Endothelial cell of umbilical vein (primary cell): ENCODE measurements at regions of chr7 and their contacts with region 1.

Region 1: GRCh38 chr7:142478479-142479072 is 220.7 kb upstream of the PRSS58 start:
- DNase-seq: peak; percentile 56
- H3K4me3 ChIP-seq: no peak overlapping the region
- H3K27ac ChIP-seq: no peak overlapping the region
- H3K4me1 ChIP-seq: peaks cover 4% of the 10 kb centered on the region
- H3K27me3 ChIP-seq: peaks cover 2 to 10% of the 10 kb centered on the region in 2 experiments
- CTCF ChIP-seq: peak; percentile 61 to 81
- POLR2A ChIP-seq: no peak

Region 2: DNA sequence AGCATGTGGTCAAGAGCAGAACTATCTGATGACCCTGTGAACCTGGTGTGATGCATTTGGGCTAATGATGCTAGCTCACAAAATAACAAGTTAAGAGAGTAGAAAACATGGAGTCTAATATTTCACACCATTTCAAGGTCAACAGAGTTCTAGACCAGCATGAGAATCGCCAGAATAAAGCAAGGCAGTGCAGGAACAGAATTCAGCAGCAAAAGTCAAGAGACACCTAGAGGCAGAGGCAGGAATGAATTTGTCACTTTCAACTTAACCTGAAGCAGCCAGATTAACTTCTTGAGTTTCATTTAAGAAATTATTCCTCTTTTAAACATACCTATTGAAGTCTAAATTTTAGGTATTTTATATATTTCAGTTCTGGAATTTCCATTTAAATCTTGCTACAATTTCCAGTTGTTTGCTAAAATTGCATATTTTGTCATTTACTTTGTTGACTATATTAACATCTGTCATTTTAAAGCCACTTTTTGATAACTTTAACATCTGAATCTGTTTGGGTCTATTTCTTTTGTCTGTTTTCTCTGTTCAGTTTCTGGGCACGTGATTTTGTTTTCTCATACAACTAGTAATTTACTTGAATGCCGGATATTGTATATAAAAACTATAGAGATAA is 176.5 kb before region 1 on chr7:
- CTCF ChIA-PET with region 1: no interaction called
- POLR2A ChIA-PET with region 1: no interaction called
- dilution Hi-C with region 1: no loop called
- intact Hi-C with region 1: no loop called
- DNase-seq: no peak
- H3K4me3 ChIP-seq: no peak overlapping the region
- H3K27ac ChIP-seq: no peak overlapping the region
- H3K4me1 ChIP-seq: no peaks in the 10 kb centered on the region
- H3K27me3 ChIP-seq: no peaks in the 10 kb centered on the region
- CTCF ChIP-seq: peak in 1 of 2 donors; percentile 32
- POLR2A ChIP-seq: no peak

Region 3: GRCh38 chr7:142385491-142386340 is 92.9 kb before region 1 on chr7:
- CTCF ChIA-PET with region 1: interaction called, 9 read pairs
- POLR2A ChIA-PET with region 1: no interaction called
- dilution Hi-C with region 1: no loop called
- intact Hi-C with region 1: loop called (anchors 2 kb)
- DNase-seq: peak; percentile 58
- H3K4me3 ChIP-seq: no peak overlapping the region
- H3K27ac ChIP-seq: no peak overlapping the region
- H3K4me1 ChIP-seq: no peaks in the 10 kb centered on the region
- H3K27me3 ChIP-seq: no peaks in the 10 kb centered on the region
- CTCF ChIP-seq: peak; percentile 73 to 90
- POLR2A ChIP-seq: no peak

Region 4: GRCh38 chr7:142438235-142438922 is 40.2 kb before region 1 on chr7:
- CTCF ChIA-PET with region 1: interaction called, 33 read pairs
- POLR2A ChIA-PET with region 1: no interaction called
- dilution Hi-C with region 1: no loop called
- intact Hi-C with region 1: loop called (anchors 1 kb)
- DNase-seq: peak; percentile 38
- H3K4me3 ChIP-seq: no peak overlapping the region
- H3K27ac ChIP-seq: no peak overlapping the region
- H3K4me1 ChIP-seq: peaks cover 27% of the 10 kb centered on the region
- H3K27me3 ChIP-seq: no peaks in the 10 kb centered on the region
- CTCF ChIP-seq: peak; percentile 81 to 98
- POLR2A ChIP-seq: no peak

Region 5: GRCh38 chr7:142459551-142459963 is 19.0 kb before region 1 on chr7:
- CTCF ChIA-PET with region 1: interaction called, 37 read pairs
- POLR2A ChIA-PET with region 1: no interaction called
- dilution Hi-C with region 1: no loop called
- intact Hi-C with region 1: loop called (anchors 1 kb)
- DNase-seq: peak; percentile 54
- H3K4me3 ChIP-seq: no peak overlapping the region
- H3K27ac ChIP-seq: no peak overlapping the region
- H3K4me1 ChIP-seq: no peaks in the 10 kb centered on the region
- H3K27me3 ChIP-seq: peaks cover 12 to 13% of the 10 kb centered on the region in 2 experiments
- CTCF ChIP-seq: peak; percentile 64 to 68
- POLR2A ChIP-seq: no peak

Region 6: GRCh38 chr7:142506601-142507000 is 28.0 kb after region 1 on chr7:
- CTCF ChIA-PET with region 1: interaction called, 12 read pairs
- POLR2A ChIA-PET with region 1: no interaction called
- dilution Hi-C with region 1: no loop called
- intact Hi-C with region 1: no loop called
- DNase-seq: no peak
- H3K4me3 ChIP-seq: no peak overlapping the region
- H3K27ac ChIP-seq: no peak overlapping the region
- H3K4me1 ChIP-seq: no peaks in the 10 kb centered on the region
- H3K27me3 ChIP-seq: peaks cover 6 to 7% of the 10 kb centered on the region in 2 experiments
- CTCF ChIP-seq: no peak
- POLR2A ChIP-seq: no peak

Region 7: GRCh38 chr7:142523821-142524460 is 45.4 kb after region 1 on chr7:
- CTCF ChIA-PET with region 1: interaction called, 5 read pairs
- POLR2A ChIA-PET with region 1: no interaction called
- dilution Hi-C with region 1: no loop called
- intact Hi-C with region 1: loop called (anchors 1 kb)
- DNase-seq: no peak
- H3K4me3 ChIP-seq: no peak overlapping the region
- H3K27ac ChIP-seq: no peak overlapping the region
- H3K4me1 ChIP-seq: no peaks in the 10 kb centered on the region
- H3K27me3 ChIP-seq: peaks cover 17 to 28% of the 10 kb centered on the region in 2 experiments
- CTCF ChIP-seq: peak in 1 of 2 donors; percentile 4
- POLR2A ChIP-seq: no peak

Region 8: GRCh38 chr7:142595816-142596516 is 117.4 kb after region 1 on chr7:
- CTCF ChIA-PET with region 1: no interaction called
- POLR2A ChIA-PET with region 1: no interaction called
- dilution Hi-C with region 1: no loop called
- intact Hi-C with region 1: no loop called
- DNase-seq: no peak
- H3K4me3 ChIP-seq: no peak overlapping the region
- H3K27ac ChIP-seq: no peak overlapping the region
- H3K4me1 ChIP-seq: no peaks in the 10 kb centered on the region
- H3K27me3 ChIP-seq: no peaks in the 10 kb centered on the region
- CTCF ChIP-seq: no peak
- POLR2A ChIP-seq: no peak